Brain microvascular endothelial cell (primary cell): ENCODE measurements at regions of chr1 and their contacts with region 1.

Region 1: DNA sequence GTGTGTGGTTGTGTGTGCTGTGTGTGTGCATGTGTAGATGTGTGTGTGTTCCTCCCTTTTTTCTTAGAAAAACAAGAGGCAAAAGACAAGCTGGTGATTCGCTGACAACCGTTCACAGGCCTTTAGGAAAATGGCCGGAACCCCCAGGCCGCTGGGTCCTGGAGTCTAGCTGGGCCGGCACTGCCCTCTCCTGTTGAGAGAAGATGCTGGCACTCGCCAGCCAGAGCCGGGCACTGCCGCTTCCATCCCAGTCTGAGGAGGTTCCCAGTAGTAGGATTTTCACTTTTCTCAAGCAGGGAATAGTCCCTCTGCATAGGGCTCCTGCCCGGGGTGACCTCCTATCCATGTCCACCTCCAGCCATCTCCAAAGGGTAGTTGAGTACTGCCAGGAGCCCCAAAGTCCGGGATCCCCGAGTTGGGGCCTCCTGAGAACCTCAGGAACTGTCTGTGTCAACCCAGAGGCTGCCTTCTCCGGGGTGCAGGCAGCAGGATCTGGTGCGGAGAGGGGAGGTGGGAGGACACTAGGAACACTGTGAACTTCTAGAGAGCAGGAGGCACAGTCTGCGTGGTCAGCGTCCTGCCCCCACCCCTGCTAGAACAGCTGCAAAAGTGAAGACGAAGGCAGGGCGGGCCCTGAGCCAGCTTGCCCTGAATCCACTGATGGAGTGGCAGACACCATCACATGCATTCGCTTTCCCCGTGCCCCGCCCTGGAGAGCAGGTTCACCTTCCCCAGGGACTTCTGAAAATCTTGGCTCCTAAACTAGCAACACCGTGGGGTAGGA is 44.1 kb upstream of the ARHGEF16 start:
- DNase-seq: peak; percentile 54
- H3K4me3 ChIP-seq: no peak overlapping the region
- H3K27ac ChIP-seq: no peak overlapping the region
- H3K27me3 ChIP-seq: no peaks in the 10 kb centered on the region
- CTCF ChIP-seq: peak; percentile 85

Region 2: DNA sequence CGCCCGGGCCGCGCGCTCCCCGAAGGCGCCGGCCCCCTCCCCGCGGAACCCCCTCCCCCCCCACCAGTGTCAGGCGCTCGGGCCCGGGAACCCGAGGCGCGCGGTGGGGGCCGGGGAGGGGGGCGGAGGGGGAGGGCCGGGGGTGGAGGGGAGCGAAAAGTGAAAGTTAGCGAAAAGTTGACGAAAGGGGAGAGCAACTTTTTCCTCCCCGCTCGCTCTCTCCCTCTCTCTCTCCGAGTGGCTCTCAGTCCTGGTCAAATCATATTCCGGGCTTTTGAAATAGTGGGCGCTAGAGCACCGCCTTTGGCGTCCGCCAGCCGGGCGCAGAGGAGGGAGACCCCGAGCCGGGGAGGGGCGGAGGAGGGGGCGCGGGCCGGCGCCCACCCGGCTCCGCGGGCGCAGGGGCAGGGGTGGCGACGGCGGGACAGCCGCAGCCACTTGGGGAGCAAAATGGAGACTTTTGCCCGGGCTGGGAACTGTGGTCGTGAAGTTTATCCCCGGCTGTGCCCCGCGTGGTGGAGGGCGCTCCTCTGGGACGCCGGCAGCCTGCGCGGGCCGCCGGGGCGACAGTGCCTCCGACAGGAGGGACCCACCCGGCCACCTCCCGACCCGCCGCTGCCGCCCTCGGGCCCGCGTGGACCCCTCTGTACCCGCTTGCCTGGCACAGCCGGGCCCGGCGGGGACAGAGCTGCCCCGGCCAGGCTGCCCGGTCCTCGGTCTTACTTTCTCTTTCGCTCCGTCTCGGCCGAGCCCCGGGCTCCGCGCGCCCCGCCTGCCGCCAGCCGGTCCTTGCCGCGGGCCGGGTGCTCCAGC is 340.6 kb before region 1 on chr1:
- in situ Hi-C with region 1: loop called (anchors 25 kb)
- DNase-seq: peak; percentile 50
- H3K4me3 ChIP-seq: peak overlapping the region; percentile 55
- H3K27ac ChIP-seq: no peak overlapping the region
- H3K27me3 ChIP-seq: peaks cover 72% of the 10 kb centered on the region
- CTCF ChIP-seq: peak; percentile 56

Region 3: DNA sequence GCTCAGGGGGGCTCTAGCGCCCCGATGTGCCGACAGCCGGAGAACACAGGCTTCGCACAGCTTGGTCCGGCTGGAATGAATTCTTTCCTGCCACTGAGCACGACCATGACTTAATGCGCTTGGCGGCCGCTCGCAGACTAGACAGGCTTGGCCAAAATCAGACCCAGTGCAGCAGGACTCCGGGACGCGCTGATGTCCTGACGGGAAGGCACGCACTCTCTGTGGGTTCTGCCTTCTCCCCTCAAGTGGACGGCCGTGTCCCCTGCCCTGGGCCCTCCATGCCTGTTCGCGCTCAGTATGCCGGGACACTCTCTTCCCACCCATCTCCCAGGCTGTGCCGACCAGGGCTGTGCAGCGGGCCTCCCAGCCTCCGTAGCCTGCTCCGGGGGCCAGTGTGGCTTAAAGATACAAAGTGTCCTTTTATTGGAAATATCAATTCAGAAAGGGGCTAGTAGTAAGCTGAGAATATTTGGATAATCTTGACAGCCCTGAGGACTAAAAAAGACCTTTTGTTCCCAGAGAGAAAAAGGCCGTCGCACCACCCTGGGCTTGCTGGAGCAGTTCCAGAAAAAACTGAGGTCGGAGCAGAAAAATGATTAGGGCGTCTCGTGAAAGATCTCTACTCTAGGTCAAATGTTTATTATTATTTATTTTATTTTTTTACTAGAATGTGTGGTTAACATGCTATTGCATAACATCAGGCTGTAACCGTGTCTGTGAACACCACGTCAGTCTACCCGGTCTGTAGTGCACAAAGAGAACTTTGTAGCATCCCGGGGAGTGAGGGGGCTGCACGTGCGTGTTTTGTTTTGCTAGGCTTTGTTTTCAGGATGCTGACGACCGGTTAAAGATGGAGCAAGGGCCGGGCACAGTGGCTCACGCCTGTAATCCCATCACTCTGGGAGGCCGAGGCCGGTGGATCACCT is 43.9 kb before region 1 on chr1:
- in situ Hi-C with region 1: no loop called
- DNase-seq: peak; percentile 47
- H3K4me3 ChIP-seq: no peak overlapping the region
- H3K27ac ChIP-seq: peak overlapping the region; percentile 22
- H3K27me3 ChIP-seq: peaks cover 14% of the 10 kb centered on the region
- CTCF ChIP-seq: no peak